H1 (cell line): ENCODE measurements at regions of chr2 and their contacts with region 1.

Region 1: DNA sequence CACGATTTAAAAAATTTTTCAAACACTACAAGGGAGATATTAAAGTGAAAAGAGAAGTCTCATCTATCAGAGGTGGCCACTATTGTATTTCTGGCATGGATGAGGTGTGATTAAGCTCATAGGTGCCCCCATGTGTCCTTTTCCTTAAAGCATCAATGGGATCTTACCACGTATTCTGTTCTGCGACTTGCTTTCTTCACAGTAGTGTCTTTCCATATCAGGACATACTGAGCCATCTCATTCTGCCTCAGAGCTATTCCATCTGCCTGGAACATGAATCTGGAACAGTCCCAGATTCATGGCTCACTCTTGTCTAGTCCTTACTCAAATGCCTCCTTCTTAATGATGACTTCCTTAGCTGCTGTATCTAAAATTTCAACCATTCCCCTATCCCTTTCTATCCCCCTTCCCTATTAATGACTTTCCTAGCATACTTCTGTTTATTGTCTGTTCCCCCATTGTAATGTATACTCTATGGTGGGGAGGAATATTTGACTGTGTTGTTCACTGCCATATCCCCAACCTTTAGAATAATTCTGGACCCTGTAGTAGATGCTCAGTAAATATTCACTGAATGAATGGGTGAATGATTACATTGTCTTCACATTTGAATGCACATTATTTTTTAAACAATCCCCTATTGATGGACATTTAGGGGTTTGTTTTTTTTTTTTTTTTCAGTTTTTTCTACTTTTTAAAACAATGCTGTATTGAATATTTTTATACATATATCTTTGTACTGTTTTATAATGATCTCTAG is 11.1 kb downstream of the STAMBP start:
- DNase-seq: no peak
- H3K4me3 ChIP-seq: no peak overlapping the region
- H3K27ac ChIP-seq: no peak overlapping the region
- H3K4me1 ChIP-seq: no peaks in the 10 kb centered on the region
- H3K27me3 ChIP-seq: no peaks in the 10 kb centered on the region
- CTCF ChIP-seq: no peak; a peak in 1 of 4 replicates
- EP300 ChIP-seq: no peak
- POLR2A ChIP-seq: no peak
- RAD21 ChIP-seq: peak in 1 of 2 experiments; percentile 12; a peak in 1 of 4 replicates

Region 2: GRCh38 chr2:73828818-73829570 is 10.8 kb before region 1 on chr2 and contains the start of gene STAMBP:
- CTCF ChIA-PET with region 1: interaction called, 31 read pairs
- POLR2A ChIA-PET with region 1: interaction called, 4 read pairs
- DNase-seq: peak; percentile 83 to 97
- H3K4me3 ChIP-seq: peak within 1 kb of the TSS; percentile 75 to 91 (median 89)
- H3K27ac ChIP-seq: peak within 1 kb of the TSS; percentile 85
- H3K4me1 ChIP-seq: peaks cover 0 to 2% (median 0%) of the 10 kb centered on the region in 4 experiments; a peak in 2 of 7 replicates
- H3K27me3 ChIP-seq: peaks cover 0 to 7% (median 1%) of the 10 kb centered on the region in 4 experiments; a peak in 4 of 7 replicates
- CTCF ChIP-seq: peak in 1 of 3 experiments; percentile 2; a peak in 1 of 4 replicates
- EP300 ChIP-seq: no peak
- POLR2A ChIP-seq: peak; percentile 84 to 88
- RAD21 ChIP-seq: no peak
- total RNA-seq, gene STAMBP: 49.7 and 50.5 TPM in 2 replicates

Region 3: GRCh38 chr2:74109551-74109950 is 269.7 kb after region 1 on chr2:
- CTCF ChIA-PET with region 1: no interaction called
- POLR2A ChIA-PET with region 1: no interaction called
- DNase-seq: no peak
- H3K4me3 ChIP-seq: no peak overlapping the region
- H3K27ac ChIP-seq: no peak overlapping the region
- H3K4me1 ChIP-seq: peaks cover 4 to 13% (median 12%) of the 10 kb centered on the region in 4 experiments
- H3K27me3 ChIP-seq: no peaks in the 10 kb centered on the region
- CTCF ChIP-seq: no peak
- EP300 ChIP-seq: no peak
- POLR2A ChIP-seq: no peak
- RAD21 ChIP-seq: no peak